ENCODE measurements at regions of chr6 and their contacts with region 1.

Region 1: DNA sequence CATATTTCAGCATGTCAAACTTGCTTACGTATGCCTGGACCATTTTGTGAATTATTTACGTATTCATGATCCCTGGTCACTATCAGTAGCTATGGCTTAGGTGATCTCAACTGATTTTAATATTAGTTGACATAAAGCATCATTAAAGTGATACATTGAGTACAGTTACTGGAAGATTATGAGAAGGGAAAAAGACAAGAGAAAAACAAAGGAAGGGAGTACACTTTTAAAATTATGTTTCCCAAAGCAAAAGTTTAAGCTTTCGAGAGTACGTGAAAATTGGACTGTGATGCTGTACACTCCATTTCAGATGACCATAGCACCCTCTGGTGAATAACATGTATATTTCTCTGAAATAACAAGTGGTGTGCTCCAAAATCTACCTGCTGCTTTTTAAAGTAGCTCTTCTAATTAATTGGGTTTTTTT is 215.0 kb upstream of the HSF2 start:
- DNase-seq: no peak
- H3K4me3 ChIP-seq: no peak overlapping the region
- H3K27me3 ChIP-seq: no peaks in the 10 kb centered on the region
- CTCF ChIP-seq: peak; percentile 51

Region 2: DNA sequence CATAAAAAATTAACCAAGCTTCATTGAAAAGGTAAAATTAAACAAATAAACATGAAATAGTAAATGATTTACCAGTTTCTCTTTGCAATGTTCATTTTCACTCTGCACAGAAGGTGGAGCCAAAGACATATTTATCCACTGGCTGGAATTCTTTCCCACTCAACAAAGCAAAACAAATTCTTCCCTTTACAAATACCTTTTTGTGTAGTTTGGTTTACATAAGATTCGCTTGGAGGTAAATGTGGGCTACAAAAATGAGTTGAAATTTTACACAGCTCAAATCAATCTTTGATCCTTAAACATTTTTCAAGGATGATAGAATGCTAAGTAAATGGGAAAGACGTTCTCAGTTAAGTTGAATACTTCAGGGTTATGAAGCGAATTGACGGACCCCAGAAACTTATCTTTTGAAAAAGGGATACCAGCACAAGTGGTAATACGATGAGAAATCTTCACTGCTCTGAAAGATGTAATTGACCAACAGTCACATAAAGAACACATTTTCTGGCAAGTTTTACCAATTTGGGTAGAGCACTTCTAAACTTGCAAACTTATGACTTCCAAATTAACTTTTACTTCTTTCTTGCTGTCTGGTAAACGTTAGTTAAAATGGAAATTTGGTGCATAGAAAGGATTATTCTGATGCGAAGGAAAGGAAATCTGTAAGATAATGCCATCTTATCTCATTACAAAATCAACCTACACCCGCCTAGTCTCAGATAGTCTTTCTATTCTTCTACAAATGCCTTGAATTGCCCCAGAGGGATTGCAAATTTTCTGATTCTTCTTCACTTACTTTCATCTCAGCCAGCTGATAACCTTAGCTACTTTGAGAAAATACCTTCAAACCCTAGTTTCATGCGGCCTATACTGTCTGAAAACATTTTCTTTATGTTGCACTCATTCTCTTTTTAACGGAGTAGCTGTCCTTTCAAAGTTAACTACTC is 753.6 kb before region 1 on chr6:
- CTCF ChIA-PET with region 1: interaction called, 50 read pairs
- POLR2A ChIA-PET with region 1: interaction called, 3 read pairs
- DNase-seq: no peak
- H3K4me3 ChIP-seq: no peak overlapping the region
- H3K27me3 ChIP-seq: no peaks in the 10 kb centered on the region
- CTCF ChIP-seq: peak; percentile 59